ENCODE measurements at regions of chr16 and their contacts with region 1.

Region 1: DNA sequence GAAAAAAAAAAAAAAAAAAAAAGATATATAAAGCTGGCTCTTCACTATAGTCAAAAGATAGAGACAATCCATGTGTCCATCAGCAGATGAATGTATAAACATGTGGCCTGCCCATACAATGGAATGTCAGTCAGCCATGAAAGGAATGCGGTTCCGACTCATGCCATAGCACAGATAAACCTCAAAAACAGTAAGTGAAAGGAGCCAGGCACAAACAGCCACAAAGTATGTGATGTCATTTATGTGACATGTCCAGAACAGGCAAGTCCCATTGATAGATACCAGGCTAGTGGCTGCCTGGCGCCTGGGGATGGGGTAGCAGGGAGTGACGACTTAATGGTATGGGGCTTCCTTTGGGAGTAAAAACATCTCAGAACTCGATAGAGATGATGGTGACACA is 155.7 kb downstream of the CMIP start:
- DNase-seq: no peak
- H3K4me3 ChIP-seq: no peak overlapping the region
- H3K27ac ChIP-seq: no peak overlapping the region
- H3K4me1 ChIP-seq: peaks cover 0 to 5% (median 4%) of the 10 kb centered on the region in 4 experiments; a peak in 3 of 7 replicates
- H3K27me3 ChIP-seq: no peaks in the 10 kb centered on the region
- CTCF ChIP-seq: no peak
- EP300 ChIP-seq: no peak
- POLR2A ChIP-seq: no peak
- RAD21 ChIP-seq: no peak

Region 2: GRCh38 chr16:81610144-81610842 is 10.0 kb after region 1 on chr16:
- CTCF ChIA-PET with region 1: interaction called, 35 read pairs
- POLR2A ChIA-PET with region 1: no interaction called
- DNase-seq: no peak
- H3K4me3 ChIP-seq: no peak overlapping the region
- H3K27ac ChIP-seq: no peak overlapping the region
- H3K4me1 ChIP-seq: no peaks in the 10 kb centered on the region; a peak in 1 of 7 replicates
- H3K27me3 ChIP-seq: no peaks in the 10 kb centered on the region; a peak in 1 of 7 replicates
- CTCF ChIP-seq: no peak
- EP300 ChIP-seq: no peak
- POLR2A ChIP-seq: no peak
- RAD21 ChIP-seq: no peak

Region 3: GRCh38 chr16:81647527-81647926 is 47.3 kb after region 1 on chr16:
- CTCF ChIA-PET with region 1: no interaction called
- POLR2A ChIA-PET with region 1: no interaction called
- DNase-seq: no peak
- H3K4me3 ChIP-seq: no peak overlapping the region
- H3K27ac ChIP-seq: no peak overlapping the region
- H3K4me1 ChIP-seq: peaks cover 7 to 21% (median 14%) of the 10 kb centered on the region in 4 experiments
- H3K27me3 ChIP-seq: no peaks in the 10 kb centered on the region; a peak in 1 of 7 replicates
- CTCF ChIP-seq: no peak
- EP300 ChIP-seq: no peak
- POLR2A ChIP-seq: no peak
- RAD21 ChIP-seq: no peak